Right cardiac atrium (tissue), 5 donors: ENCODE measurements at regions of chr6 and their contacts with region 1.

Region 1: GRCh38 chr6:32868257-32868788 is 14.3 kb downstream of the PSMB9 start:
- DNase-seq: peak; percentile 78 to 91 (median 82)
- ATAC-seq: peak; percentile 66 to 88
- H3K4me3 ChIP-seq: no peak overlapping the region
- H3K27ac ChIP-seq: no peak overlapping the region
- H3K4me1 ChIP-seq: no peaks in the 10 kb centered on the region
- H3K27me3 ChIP-seq: no peaks in the 10 kb centered on the region

Region 2: GRCh38 chr6:32807020-32807580 is 61.2 kb before region 1 on chr6:
- intact Hi-C with region 1: no loop called
- DNase-seq: peak in 1 of 3 donors; percentile 32
- ATAC-seq: no peak
- H3K4me3 ChIP-seq: no peak overlapping the region
- H3K27ac ChIP-seq: no peak overlapping the region
- H3K4me1 ChIP-seq: no peaks in the 10 kb centered on the region
- H3K27me3 ChIP-seq: no peaks in the 10 kb centered on the region

Region 3: DNA sequence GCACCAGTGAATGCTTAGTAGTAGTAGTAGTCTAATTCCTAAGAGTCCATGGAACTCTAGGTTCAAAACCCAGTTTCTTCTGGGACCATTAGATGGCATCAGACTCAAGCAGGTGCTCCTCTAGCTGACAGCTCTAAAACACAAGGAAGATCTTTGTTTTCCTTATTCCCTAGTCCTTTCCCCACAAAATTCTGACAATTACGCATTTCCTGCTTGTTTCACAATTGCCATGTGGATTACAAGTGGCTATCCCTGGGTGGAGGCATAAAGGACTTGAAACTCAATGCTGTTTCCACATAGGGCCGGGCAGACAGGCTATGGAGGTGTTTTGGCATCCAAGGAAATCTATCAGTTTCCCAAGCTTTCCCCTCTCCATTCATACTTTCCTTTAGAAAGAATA is 42.4 kb before region 1 on chr6:
- intact Hi-C with region 1: loop called in 1 of 4 experiments (anchors 5 kb)
- DNase-seq: peak in 1 of 3 donors; percentile 28
- ATAC-seq: peak; percentile 77 to 84
- H3K4me3 ChIP-seq: no peak overlapping the region
- H3K27ac ChIP-seq: peak overlapping the region; percentile 9
- H3K4me1 ChIP-seq: no peaks in the 10 kb centered on the region
- H3K27me3 ChIP-seq: no peaks in the 10 kb centered on the region

Region 4: GRCh38 chr6:32838114-32838958 is 30.0 kb before region 1 on chr6 and contains the start of gene TAP2:
- intact Hi-C with region 1: loop called in 2 of 4 experiments (anchors 2 kb)
- DNase-seq: peak; percentile 95 to 99 (median 99)
- ATAC-seq: peak; percentile 95 to 97
- H3K4me3 ChIP-seq: peak within 1 kb of the TSS; percentile 86
- H3K27ac ChIP-seq: peak within 1 kb of the TSS; percentile 90
- H3K4me1 ChIP-seq: peaks cover 3% of the 10 kb centered on the region
- H3K27me3 ChIP-seq: no peaks in the 10 kb centered on the region
- total RNA-seq, gene TAP2: 17.0 to 23.3 (median 20.4) TPM